Activated T-helper 1 cell treated with anti-CD3 and anti-CD28 coated beads, Interleukin-12 subunit alpha, Interleukin-12 subunit beta, Interleukin-2, Interleukin-4 antibody, amounts not matched to agents 30 ng/mL and 10 ng/mL and 1 ng/mL, durations not matched to agents 14 hours and 24 hours and 36 hours (primary cell): ENCODE measurements at regions of chr17 and their contacts with region 1.

Region 1: GRCh38 chr17:35022536-35023063 is 40.9 kb downstream of the RFFL start:
- DNase-seq: peak; percentile 67
- H3K4me3 Mint-ChIP-seq: peak overlapping the region; percentile 79
- H3K27ac Mint-ChIP-seq: peak overlapping the region; percentile 99
- H3K4me1 Mint-ChIP-seq: peaks cover 70% of the 10 kb centered on the region
- H3K27me3 Mint-ChIP-seq: no peaks in the 10 kb centered on the region

Region 2: GRCh38 chr17:34840750-34841149 is 181.8 kb before region 1 on chr17:
- intact Hi-C with region 1: no loop called
- DNase-seq: no peak
- H3K4me3 Mint-ChIP-seq: no peak overlapping the region
- H3K27ac Mint-ChIP-seq: no peak overlapping the region
- H3K4me1 Mint-ChIP-seq: no peaks in the 10 kb centered on the region
- H3K27me3 Mint-ChIP-seq: no peaks in the 10 kb centered on the region

Region 3: DNA sequence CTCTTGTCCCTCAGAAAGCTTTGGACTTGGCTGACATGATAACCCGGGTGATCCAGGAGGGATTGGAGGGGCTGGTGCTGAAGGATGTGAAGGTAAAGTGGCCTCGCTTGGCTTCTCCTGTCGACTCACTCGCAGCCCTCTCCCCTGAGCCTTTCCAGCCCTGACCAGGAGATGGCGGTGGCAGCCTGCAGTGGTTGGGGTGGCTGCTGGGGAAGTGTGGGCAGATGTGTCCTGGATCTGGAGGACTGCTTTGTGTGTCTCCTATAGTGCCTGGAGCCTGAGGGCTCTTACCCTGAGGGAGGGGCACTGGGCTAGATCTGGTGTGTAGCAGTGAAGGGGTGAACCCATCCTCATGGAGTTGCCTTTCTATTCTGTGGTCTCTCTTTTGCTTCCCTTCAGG is 24.4 kb before region 1 on chr17:
- intact Hi-C with region 1: loop called (anchors 1 kb)
- DNase-seq: peak; percentile 77
- H3K4me3 Mint-ChIP-seq: no peak overlapping the region
- H3K27ac Mint-ChIP-seq: peak overlapping the region; percentile 11
- H3K4me1 Mint-ChIP-seq: peaks cover 21% of the 10 kb centered on the region
- H3K27me3 Mint-ChIP-seq: no peaks in the 10 kb centered on the region

Region 4: DNA sequence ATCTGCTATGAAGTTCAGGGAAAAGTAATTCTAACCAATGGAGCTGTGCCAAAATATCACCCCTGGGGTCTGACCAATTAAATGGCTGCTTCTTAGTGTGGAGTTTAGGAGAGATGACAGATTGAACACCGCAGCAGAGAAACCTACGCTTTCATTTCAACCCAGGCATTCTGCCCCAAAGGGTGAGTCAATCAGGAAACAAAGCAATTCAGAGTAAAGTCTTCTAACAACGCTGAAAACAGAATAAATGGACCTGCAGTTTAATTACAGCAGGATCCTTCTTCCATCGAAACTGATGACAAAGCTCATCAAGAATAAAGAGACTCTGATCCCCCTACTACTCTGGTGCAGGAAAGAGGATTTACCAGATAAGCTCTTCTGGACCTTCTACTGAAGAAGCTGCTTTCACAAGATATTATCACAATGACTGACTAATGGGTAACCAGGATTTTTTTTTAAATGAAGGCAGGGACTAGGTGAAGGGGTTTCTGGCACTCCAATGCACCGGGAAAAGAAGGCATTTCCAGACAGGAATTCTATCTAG is 24.2 kb after region 1 on chr17:
- intact Hi-C with region 1: loop called (anchors 1 kb)
- DNase-seq: peak; percentile 65
- H3K4me3 Mint-ChIP-seq: peak overlapping the region; percentile 66
- H3K27ac Mint-ChIP-seq: peak overlapping the region; percentile 97
- H3K4me1 Mint-ChIP-seq: peaks cover 49% of the 10 kb centered on the region
- H3K27me3 Mint-ChIP-seq: no peaks in the 10 kb centered on the region